SK-N-SH (cell line): ENCODE measurements at regions of chr10 and their contacts with region 1.

Region 1: DNA sequence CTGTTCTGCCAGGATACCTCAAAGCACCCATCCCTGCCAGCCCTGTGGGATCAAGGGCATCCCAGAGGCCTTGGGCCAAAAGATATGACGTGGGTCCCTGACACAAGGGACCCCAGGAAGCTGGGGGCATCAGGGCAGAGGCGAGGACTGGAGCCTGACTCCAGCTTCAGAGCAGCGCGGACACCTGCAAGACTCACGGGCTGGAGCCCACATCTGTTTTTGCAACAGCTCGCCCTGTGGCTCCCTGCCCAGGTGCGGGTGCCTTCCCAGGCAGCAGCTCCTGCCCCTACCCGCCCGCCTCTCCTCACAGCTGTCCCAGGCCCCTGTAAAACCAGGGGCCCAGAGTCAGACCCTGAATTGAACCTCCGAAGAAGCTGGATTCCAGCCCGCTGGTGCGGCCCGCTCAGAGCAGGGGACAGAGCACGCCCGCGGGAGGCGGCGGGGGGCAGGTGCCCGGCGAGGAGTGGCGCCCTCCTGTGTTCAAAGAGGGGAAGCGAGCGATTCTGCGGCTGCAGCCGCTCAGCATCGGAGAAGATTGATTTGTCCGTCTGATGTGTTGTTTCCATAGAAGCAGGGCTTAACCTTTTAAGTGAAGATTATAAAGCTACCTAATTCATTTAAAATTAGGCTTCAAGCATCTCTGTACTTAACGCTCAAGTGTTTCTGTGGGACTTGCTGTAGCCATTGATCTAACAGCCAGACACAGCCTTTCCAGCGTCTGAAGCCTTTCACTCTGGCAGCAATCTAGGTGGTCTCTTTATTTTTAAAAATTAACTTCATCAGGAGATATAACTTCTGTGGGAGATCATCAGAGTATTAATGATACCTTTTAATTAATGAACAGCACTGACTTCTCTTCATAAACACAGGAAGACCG is 88.4 kb downstream of the BEND7 start:
- DNase-seq: peak; percentile 87
- H3K4me3 ChIP-seq: peak overlapping the region; percentile 49 to 61
- H3K27ac ChIP-seq: no peak overlapping the region
- H3K4me1 ChIP-seq: peaks cover 7 to 11% of the 10 kb centered on the region in 2 experiments; a peak in 3 of 4 replicates
- H3K27me3 ChIP-seq: no peaks in the 10 kb centered on the region; the same call in 1 of the 2 replicates
- CTCF ChIP-seq: peak; percentile 93
- EP300 ChIP-seq: no peak
- RAD21 ChIP-seq: peak; percentile 58

Region 2: GRCh38 chr10:13371897-13372470 is 68.4 kb before region 1 on chr10:
- CTCF ChIA-PET with region 1: interaction called, 116 read pairs
- POLR2A ChIA-PET with region 1: no interaction called
- DNase-seq: peak; percentile 91
- H3K4me3 ChIP-seq: peak overlapping the region in 1 of 2 experiments; percentile 33; a peak in 1 of 4 replicates
- H3K27ac ChIP-seq: no peak overlapping the region
- H3K4me1 ChIP-seq: no peaks in the 10 kb centered on the region
- H3K27me3 ChIP-seq: no peaks in the 10 kb centered on the region
- CTCF ChIP-seq: peak; percentile 98
- EP300 ChIP-seq: no peak
- RAD21 ChIP-seq: peak; percentile 99

Region 3: DNA sequence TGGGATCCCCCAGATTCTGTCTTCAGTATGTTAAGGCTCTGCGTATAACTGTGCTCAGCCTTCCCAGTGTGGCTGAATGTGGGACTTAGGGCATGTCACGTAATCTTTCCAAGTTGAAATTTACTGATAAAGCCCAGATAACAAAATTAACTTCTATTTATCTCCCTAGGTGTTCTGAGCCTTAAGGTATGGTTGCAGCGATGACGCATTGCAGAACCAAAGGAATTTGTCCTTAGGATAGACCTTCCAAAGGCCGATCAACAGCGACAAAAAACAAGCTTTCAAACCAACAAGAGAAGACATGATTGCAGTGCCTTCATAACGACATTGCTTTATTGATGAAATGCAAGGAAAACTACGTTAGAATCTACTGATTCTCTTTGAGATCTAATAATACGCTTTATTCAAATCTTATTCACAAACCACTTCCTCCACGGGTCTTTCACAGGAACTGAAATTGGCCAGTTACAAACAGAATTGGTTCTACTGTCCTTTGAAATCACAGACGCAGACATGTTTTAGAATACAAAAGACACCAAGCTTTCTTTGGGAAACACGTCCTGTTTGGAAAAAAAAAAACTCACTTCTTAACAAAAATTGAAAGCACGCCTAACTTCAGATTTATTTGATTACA is 17.7 kb before region 1 on chr10:
- CTCF ChIA-PET with region 1: interaction called, 26 read pairs
- POLR2A ChIA-PET with region 1: no interaction called
- DNase-seq: no peak
- H3K4me3 ChIP-seq: no peak overlapping the region
- H3K27ac ChIP-seq: no peak overlapping the region
- H3K4me1 ChIP-seq: no peaks in the 10 kb centered on the region
- H3K27me3 ChIP-seq: no peaks in the 10 kb centered on the region; the same call in 1 of the 2 replicates
- CTCF ChIP-seq: no peak
- EP300 ChIP-seq: no peak
- RAD21 ChIP-seq: no peak

Region 4: GRCh38 chr10:13470270-13470669 is 29.8 kb after region 1 on chr10:
- CTCF ChIA-PET with region 1: interaction called, 15 read pairs
- POLR2A ChIA-PET with region 1: no interaction called
- DNase-seq: no peak
- H3K4me3 ChIP-seq: no peak overlapping the region
- H3K27ac ChIP-seq: no peak overlapping the region
- H3K4me1 ChIP-seq: no peaks in the 10 kb centered on the region
- H3K27me3 ChIP-seq: no peaks in the 10 kb centered on the region
- CTCF ChIP-seq: peak; percentile 21; the same call in 1 of the 2 replicates
- EP300 ChIP-seq: no peak
- RAD21 ChIP-seq: no peak

Region 5: GRCh38 chr10:13536674-13537366 is 96.4 kb after region 1 on chr10:
- CTCF ChIA-PET with region 1: interaction called, 24 read pairs
- POLR2A ChIA-PET with region 1: no interaction called
- DNase-seq: peak; percentile 82
- H3K4me3 ChIP-seq: no peak overlapping the region
- H3K27ac ChIP-seq: no peak overlapping the region
- H3K4me1 ChIP-seq: peaks cover 0 to 4% of the 10 kb centered on the region in 2 experiments; a peak in 1 of 4 replicates
- H3K27me3 ChIP-seq: peaks cover 12% of the 10 kb centered on the region
- CTCF ChIP-seq: peak; percentile 59
- EP300 ChIP-seq: no peak
- RAD21 ChIP-seq: peak; percentile 75